ENCODE measurements at regions of chr5 and their contacts with region 1.

Region 1: DNA sequence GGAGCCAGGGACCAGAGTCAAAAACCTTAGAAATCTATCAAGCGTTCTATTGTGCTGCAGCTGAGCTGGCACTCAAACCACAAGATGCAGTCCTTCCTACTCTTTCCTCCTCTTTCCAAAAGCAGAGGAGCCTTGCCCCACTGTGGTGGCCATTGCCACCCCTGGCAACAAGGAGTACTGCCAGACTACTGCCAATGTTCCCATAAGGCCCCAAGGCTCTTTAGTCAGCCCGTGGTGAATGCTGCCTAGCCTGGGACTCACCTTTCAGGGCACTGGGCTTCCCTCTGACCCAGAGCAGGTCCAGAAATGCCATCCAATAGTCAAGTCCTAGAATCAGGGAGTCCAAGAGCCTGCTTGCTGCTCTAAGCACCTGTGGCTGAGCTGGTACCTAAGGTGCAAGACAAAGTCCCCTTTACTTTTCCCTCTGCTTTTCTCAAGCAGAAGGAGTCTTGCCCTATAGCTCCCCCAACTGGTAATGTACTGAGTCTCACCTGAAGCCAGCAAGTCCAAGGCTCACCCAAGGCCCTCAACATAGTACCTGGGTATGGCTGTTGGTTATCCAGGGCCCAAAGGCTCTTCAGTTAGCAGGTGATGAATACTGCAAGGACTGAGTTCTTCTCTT is 219.4 kb downstream of the ATPSCKMT start:
- DNase-seq: peak in 1 of 2 experiments; percentile 62
- H3K4me3 ChIP-seq: no peak overlapping the region
- H3K27ac ChIP-seq: no peak overlapping the region
- H3K4me1 ChIP-seq: no peaks in the 10 kb centered on the region; a peak in 1 of 7 replicates
- H3K27me3 ChIP-seq: no peaks in the 10 kb centered on the region
- CTCF ChIP-seq: peak; percentile 48 to 68 (median 67)
- EP300 ChIP-seq: no peak
- POLR2A ChIP-seq: no peak
- RAD21 ChIP-seq: peak; percentile 75 to 85

Region 2: DNA sequence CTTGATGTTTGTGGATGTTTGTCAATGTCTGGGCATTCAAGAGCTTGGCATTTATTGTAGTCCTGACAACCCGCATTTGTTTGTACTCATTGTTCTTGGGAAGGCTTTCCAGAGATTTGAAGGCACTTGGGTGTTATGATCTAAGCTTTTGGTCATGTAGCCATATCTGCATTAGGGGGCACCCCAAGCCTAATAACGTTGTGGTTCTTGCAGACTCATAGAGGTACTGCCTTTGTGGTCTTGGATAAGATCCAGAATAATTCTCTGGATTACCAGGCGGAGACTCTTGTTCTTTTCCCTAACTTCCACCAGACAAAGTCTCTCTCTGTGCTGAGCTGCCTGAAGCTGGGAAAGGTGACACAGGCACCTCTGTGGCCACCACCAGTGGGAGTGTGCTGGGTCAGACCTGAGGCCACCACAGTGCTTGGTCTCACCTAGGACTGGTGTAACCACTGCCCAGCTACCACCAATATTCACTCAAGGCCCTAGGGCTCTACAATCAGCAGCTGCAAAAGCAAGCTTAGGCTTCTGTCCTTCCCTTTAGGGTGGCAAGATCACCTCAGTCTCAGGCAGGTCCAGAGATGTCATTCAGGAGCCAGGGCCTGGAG is 255.7 kb before region 1 on chr5:
- CTCF ChIA-PET with region 1: interaction called, 25 read pairs
- POLR2A ChIA-PET with region 1: no interaction called
- DNase-seq: no peak
- H3K4me3 ChIP-seq: no peak overlapping the region
- H3K27ac ChIP-seq: no peak overlapping the region
- H3K4me1 ChIP-seq: no peaks in the 10 kb centered on the region
- H3K27me3 ChIP-seq: no peaks in the 10 kb centered on the region
- CTCF ChIP-seq: peak in 2 of 3 experiments; percentile 34 to 49; a peak in 3 of 4 replicates
- EP300 ChIP-seq: no peak
- POLR2A ChIP-seq: no peak
- RAD21 ChIP-seq: peak; percentile 75 to 82

Region 3: GRCh38 chr5:9898319-9898718 is 132.0 kb before region 1 on chr5:
- CTCF ChIA-PET with region 1: interaction called, 54 read pairs
- POLR2A ChIA-PET with region 1: no interaction called
- DNase-seq: peak in 1 of 2 experiments; percentile 47
- H3K4me3 ChIP-seq: no peak overlapping the region
- H3K27ac ChIP-seq: no peak overlapping the region
- H3K4me1 ChIP-seq: peaks cover 0 to 7% (median 0%) of the 10 kb centered on the region in 4 experiments; a peak in 1 of 7 replicates
- H3K27me3 ChIP-seq: no peaks in the 10 kb centered on the region
- CTCF ChIP-seq: peak; percentile 50 to 79 (median 75)
- EP300 ChIP-seq: no peak
- POLR2A ChIP-seq: no peak
- RAD21 ChIP-seq: peak; percentile 64 to 67

Region 4: GRCh38 chr5:9947225-9947714 is 83.1 kb before region 1 on chr5:
- CTCF ChIA-PET with region 1: interaction called, 13 read pairs
- POLR2A ChIA-PET with region 1: no interaction called
- DNase-seq: no peak
- H3K4me3 ChIP-seq: no peak overlapping the region
- H3K27ac ChIP-seq: no peak overlapping the region
- H3K4me1 ChIP-seq: peaks cover 0 to 4% (median 2%) of the 10 kb centered on the region in 4 experiments; a peak in 3 of 7 replicates
- H3K27me3 ChIP-seq: no peaks in the 10 kb centered on the region
- CTCF ChIP-seq: no peak
- EP300 ChIP-seq: no peak
- POLR2A ChIP-seq: no peak
- RAD21 ChIP-seq: no peak

Region 5: GRCh38 chr5:10046676-10047075 is 16.4 kb after region 1 on chr5:
- CTCF ChIA-PET with region 1: interaction called, 14 read pairs
- POLR2A ChIA-PET with region 1: no interaction called
- DNase-seq: no peak
- H3K4me3 ChIP-seq: no peak overlapping the region
- H3K27ac ChIP-seq: no peak overlapping the region
- H3K4me1 ChIP-seq: peaks cover 0 to 4% (median 0%) of the 10 kb centered on the region in 4 experiments; a peak in 1 of 7 replicates
- H3K27me3 ChIP-seq: no peaks in the 10 kb centered on the region
- CTCF ChIP-seq: no peak
- EP300 ChIP-seq: no peak
- POLR2A ChIP-seq: no peak
- RAD21 ChIP-seq: no peak

Region 6: DNA sequence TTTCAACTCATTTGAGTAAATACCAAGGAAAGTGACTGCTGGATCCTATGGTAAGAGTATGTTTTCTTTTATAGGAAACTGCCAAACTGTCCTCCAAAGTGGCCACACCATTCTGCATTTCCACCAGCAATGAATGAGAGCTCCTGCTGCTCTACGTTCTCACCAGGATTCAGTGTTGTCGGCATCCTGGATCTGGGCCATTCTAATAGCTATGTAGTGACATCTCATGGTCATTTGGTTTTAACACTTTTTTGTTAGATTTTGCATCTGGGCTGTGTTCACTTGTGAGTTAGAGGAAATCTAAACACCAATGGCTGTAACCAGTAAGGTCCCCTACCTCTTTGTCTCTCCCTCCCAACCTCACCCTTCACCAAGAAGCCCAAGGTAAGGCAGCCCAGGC is 103.5 kb after region 1 on chr5:
- CTCF ChIA-PET with region 1: interaction called, 11 read pairs
- POLR2A ChIA-PET with region 1: no interaction called
- DNase-seq: peak in 1 of 2 experiments; percentile 39
- H3K4me3 ChIP-seq: no peak overlapping the region
- H3K27ac ChIP-seq: no peak overlapping the region
- H3K4me1 ChIP-seq: no peaks in the 10 kb centered on the region
- H3K27me3 ChIP-seq: no peaks in the 10 kb centered on the region
- CTCF ChIP-seq: peak in 2 of 3 experiments; percentile 11 to 18; a peak in 2 of 4 replicates
- EP300 ChIP-seq: no peak
- POLR2A ChIP-seq: no peak
- RAD21 ChIP-seq: peak; percentile 55 to 66

Region 7: DNA sequence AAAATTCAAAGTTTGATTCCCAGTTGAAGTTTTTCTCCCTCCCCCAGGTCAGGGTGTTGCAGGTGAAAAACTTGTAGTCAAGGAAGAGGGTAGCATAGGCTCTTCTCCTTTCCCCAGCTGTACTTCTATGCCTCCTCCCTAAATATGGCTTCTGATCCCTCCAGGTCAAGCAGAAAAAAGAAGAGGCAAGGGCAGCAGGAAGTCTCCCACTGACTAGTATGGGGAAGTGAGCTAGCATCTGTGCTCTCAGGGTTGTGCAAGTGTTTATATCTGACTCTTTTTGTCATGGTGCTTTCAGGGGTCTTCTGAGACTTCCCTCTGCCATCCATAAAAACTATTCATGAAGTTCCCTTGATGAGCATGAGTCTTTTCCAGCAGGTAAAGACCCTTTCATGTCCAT is 143.4 kb after region 1 on chr5:
- CTCF ChIA-PET with region 1: no interaction called
- POLR2A ChIA-PET with region 1: no interaction called
- DNase-seq: no peak
- H3K4me3 ChIP-seq: no peak overlapping the region
- H3K27ac ChIP-seq: no peak overlapping the region
- H3K4me1 ChIP-seq: no peaks in the 10 kb centered on the region
- H3K27me3 ChIP-seq: no peaks in the 10 kb centered on the region
- CTCF ChIP-seq: no peak
- EP300 ChIP-seq: no peak
- POLR2A ChIP-seq: no peak
- RAD21 ChIP-seq: no peak

Measured in H1 (cell line).